ENCODE measurements at regions of chr7 and their contacts with region 1.

Region 1: DNA sequence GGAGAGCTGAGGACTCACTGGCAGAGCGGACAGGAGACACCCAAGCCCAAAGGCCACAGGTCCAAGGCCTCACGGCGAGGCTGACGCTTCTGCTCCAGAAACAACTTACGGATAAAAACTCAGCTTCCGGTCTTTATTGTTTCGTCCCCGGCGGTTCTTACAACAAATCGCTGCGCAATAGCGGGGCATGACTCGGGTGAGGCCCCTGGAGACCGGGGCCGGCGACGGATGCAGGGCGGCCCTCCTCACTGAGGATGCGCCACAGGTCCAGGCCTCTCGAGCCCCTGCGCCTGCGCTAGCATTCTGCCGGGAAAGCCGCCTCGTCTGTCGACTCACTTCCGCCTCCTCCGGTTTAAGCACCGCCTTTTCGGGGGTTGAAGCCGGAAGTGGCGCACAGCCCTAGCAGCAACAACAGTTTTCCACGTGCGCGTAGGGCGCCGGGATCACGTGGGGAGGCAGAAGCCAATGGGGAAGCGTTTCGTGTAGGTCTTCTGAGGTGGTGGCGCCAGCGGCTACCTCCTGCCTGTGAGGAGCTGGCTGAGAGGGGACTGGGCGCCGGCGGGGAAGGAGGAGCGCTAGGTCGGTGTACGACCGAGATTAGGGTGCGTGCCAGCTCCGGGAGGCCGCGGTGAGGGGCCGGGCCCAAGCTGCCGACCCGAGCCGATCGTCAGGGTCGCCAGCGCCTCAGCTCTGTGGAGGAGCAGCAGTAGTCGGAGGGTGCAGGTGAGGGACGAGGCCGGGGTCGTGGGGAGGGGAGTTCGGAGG is at the starts of genes DNAJB9 and THAP5:
- DNase-seq: peak; percentile 100
- H3K4me3 Mint-ChIP-seq: peak within 1 kb of the TSS; percentile 100
- H3K27ac Mint-ChIP-seq: peak within 1 kb of the TSS; percentile 100
- H3K4me1 Mint-ChIP-seq: peaks cover 39% of the 10 kb centered on the region
- H3K27me3 Mint-ChIP-seq: no peaks in the 10 kb centered on the region
- total RNA-seq, gene DNAJB9: 11.5 and 12.7 TPM in 2 replicates
- total RNA-seq, gene THAP5: 35.6 TPM in 2 replicates

Region 2: DNA sequence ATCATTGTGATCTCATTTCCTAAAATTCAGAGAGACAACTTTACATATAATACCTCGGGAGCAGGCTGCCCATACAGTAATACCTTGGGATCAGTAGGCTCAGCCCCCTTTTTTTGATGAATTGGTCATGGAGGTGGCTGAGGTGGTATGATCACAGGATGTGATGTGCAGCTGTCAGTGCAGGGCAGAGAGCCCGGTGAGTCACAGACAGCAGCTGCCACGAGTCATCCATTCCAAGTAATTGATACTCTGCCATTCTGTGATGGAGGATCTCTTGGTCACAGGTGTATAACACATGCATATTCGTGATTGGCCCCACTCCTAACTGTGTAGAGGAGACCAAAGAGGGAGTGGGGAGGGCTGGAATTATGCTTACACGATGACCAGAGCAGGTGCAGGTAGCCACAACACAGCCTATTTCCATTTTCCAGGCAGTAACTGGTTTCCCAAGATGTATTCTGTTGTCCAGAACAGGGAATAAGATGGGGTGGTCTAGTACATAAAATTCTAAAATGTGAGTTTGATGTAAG is 127.5 kb before region 1 on chr7:
- intact Hi-C with region 1: no loop called
- DNase-seq: no peak
- H3K4me3 Mint-ChIP-seq: no peak overlapping the region
- H3K27ac Mint-ChIP-seq: no peak overlapping the region
- H3K4me1 Mint-ChIP-seq: peaks cover 3% of the 10 kb centered on the region
- H3K27me3 Mint-ChIP-seq: peaks cover 13% of the 10 kb centered on the region

Region 3: DNA sequence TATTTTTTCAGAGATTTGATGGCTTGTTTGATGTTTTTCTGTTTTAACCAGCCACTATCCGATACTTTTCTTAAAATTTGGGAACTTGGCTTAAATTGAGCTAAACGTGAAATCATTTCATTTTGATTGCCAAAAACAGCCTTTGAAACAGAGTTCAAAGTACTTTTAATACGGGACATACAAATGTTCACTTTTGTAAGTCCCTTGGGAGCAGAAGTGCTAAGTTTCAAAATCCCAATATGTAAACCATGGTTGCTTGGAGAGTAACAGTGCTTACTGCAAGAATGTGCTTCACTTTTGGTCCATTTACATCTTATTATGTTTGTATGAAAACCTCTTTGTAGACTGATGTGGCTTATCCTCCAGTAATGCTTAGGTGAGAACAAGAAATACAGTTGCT is 54.5 kb before region 1 on chr7:
- intact Hi-C with region 1: no loop called
- DNase-seq: no peak
- H3K4me3 Mint-ChIP-seq: no peak overlapping the region
- H3K27ac Mint-ChIP-seq: no peak overlapping the region
- H3K4me1 Mint-ChIP-seq: peaks cover 4% of the 10 kb centered on the region
- H3K27me3 Mint-ChIP-seq: no peaks in the 10 kb centered on the region

Region 4: GRCh38 chr7:108525985-108526767 is 43.4 kb before region 1 on chr7 and contains the start of gene PNPLA8:
- intact Hi-C with region 1: loop called (anchors 1 kb)
- DNase-seq: peak; percentile 100
- H3K4me3 Mint-ChIP-seq: peak within 1 kb of the TSS; percentile 88
- H3K27ac Mint-ChIP-seq: peak within 1 kb of the TSS; percentile 100
- H3K4me1 Mint-ChIP-seq: peaks cover 36% of the 10 kb centered on the region
- H3K27me3 Mint-ChIP-seq: peaks cover 2% of the 10 kb centered on the region
- total RNA-seq, gene PNPLA8: 16.6 and 17.2 TPM in 2 replicates